Naive thymus-derived CD8-positive, alpha-beta T cell (primary cell): ENCODE measurements at regions of chr15 and their contacts with region 1.

Region 1: GRCh38 chr15:40928821-40929659 is at the start of gene DLL4:
- DNase-seq: peak in 6 of 10 donors; percentile 16 to 55 (median 47)
- ATAC-seq: peak; percentile 49 to 62
- H3K4me3 Mint-ChIP-seq: peak within 1 kb of the TSS; percentile 73 to 90 (median 84)
- H3K27ac Mint-ChIP-seq: peak within 1 kb of the TSS in 1 of 10 donors; percentile 44
- H3K4me1 Mint-ChIP-seq: peaks cover 23 to 66% (median 56%) of the 10 kb centered on the region in 4 donors
- H3K27me3 Mint-ChIP-seq: peaks cover 22 to 72% (median 53%) of the 10 kb centered on the region in 5 donors
- polyA plus RNA-seq, gene DLL4: not detected

Region 2: GRCh38 chr15:40906091-40906990 is 22.7 kb before region 1 on chr15:
- POLR2A ChIA-PET with region 1: interaction called, 17 read pairs
- DNase-seq: peak; percentile 65 to 84 (median 77)
- ATAC-seq: peak; percentile 66 to 75
- H3K4me3 Mint-ChIP-seq: peak overlapping the region; percentile 79 to 93 (median 86)
- H3K27ac Mint-ChIP-seq: peak overlapping the region; percentile 13 to 95 (median 91)
- H3K4me1 Mint-ChIP-seq: peaks cover 12 to 46% (median 43%) of the 10 kb centered on the region in 4 donors
- H3K27me3 Mint-ChIP-seq: no peaks in the 10 kb centered on the region